IMR-90 (cell line): ENCODE measurements at regions of chr13 and their contacts with region 1.

Region 1: GRCh38 chr13:73025217-73026012 is 33.4 kb upstream of the KLF5 start:
- DNase-seq: peak; percentile 47
- ATAC-seq: no peak
- H3K4me3 ChIP-seq: no peak overlapping the region
- H3K27ac ChIP-seq: no peak overlapping the region
- H3K4me1 ChIP-seq: no peaks in the 10 kb centered on the region
- H3K27me3 ChIP-seq: no peaks in the 10 kb centered on the region
- CTCF ChIP-seq: no peak
- POLR2A ChIP-seq: no peak
- RAD21 ChIP-seq: no peak

Region 2: GRCh38 chr13:72963762-72964161 is 61.7 kb before region 1 on chr13:
- CTCF ChIA-PET with region 1: no interaction called
- POLR2A ChIA-PET with region 1: no interaction called
- dilution Hi-C with region 1: no loop called
- in situ Hi-C with region 1: no loop called
- intact Hi-C with region 1: no loop called
- DNase-seq: no peak
- ATAC-seq: no peak
- H3K4me3 ChIP-seq: no peak overlapping the region
- H3K27ac ChIP-seq: no peak overlapping the region
- H3K4me1 ChIP-seq: no peaks in the 10 kb centered on the region
- H3K27me3 ChIP-seq: no peaks in the 10 kb centered on the region
- CTCF ChIP-seq: no peak
- POLR2A ChIP-seq: no peak
- RAD21 ChIP-seq: no peak

Region 3: DNA sequence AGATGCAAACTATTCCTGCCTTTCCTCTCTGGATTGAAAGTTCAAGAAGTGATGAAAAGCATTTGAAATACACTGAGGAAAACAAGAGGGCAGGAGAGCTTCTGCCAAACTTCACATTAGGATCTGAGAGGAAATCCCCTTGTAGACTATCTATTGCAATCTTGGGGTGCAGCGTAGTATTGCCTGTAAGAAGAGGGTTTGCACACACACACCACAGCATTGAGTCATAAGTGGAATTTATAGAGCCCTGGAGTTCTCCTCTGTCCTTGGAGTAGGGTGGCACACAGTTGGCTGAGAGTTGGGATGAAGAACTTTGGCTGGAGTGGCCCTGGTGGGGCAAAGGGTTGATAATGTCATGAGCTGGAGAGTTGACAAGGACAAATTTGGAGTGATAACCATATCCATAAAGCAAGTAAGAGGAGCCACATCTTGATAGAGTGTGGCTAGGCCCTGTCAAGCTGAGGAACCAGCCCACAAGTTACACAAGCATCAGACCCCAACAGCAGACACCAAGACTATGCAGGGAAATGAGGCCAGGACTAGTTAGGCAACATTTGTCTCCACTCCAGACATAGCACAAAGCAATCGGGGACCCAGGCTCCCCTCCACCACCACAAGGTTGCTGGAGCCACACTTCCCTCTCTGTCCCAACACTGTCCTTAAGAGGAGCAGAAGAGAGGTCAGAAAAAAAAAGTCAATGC is 554.3 kb after region 1 on chr13:
- CTCF ChIA-PET with region 1: no interaction called
- POLR2A ChIA-PET with region 1: interaction called, 10 read pairs
- dilution Hi-C with region 1: no loop called
- in situ Hi-C with region 1: no loop called
- intact Hi-C with region 1: no loop called
- DNase-seq: no peak
- ATAC-seq: no peak
- H3K4me3 ChIP-seq: no peak overlapping the region
- H3K27ac ChIP-seq: no peak overlapping the region
- H3K4me1 ChIP-seq: 0 out of 2 replicates have a peak, but pooled peaks cover 2% of the 10 kb centered on the region
- H3K27me3 ChIP-seq: no peaks in the 10 kb centered on the region; the same call in 1 of the 2 replicates
- CTCF ChIP-seq: no peak
- POLR2A ChIP-seq: no peak
- RAD21 ChIP-seq: no peak

Region 4: GRCh38 chr13:73684286-73684685 is 658.9 kb after region 1 on chr13:
- CTCF ChIA-PET with region 1: no interaction called
- POLR2A ChIA-PET with region 1: no interaction called
- dilution Hi-C with region 1: no loop called
- in situ Hi-C with region 1: no loop called
- intact Hi-C with region 1: no loop called
- DNase-seq: no peak
- ATAC-seq: no peak
- H3K4me3 ChIP-seq: no peak overlapping the region
- H3K27ac ChIP-seq: no peak overlapping the region
- H3K4me1 ChIP-seq: no peaks in the 10 kb centered on the region
- H3K27me3 ChIP-seq: no peaks in the 10 kb centered on the region
- CTCF ChIP-seq: no peak
- POLR2A ChIP-seq: no peak
- RAD21 ChIP-seq: no peak